ENCODE measurements at regions of chr1 and their contacts with region 1.

Region 1: GRCh38 chr1:189429610-189430009 is 1048.1 kb downstream of the BRINP3 start:
- DNase-seq: peak; percentile 81
- H3K4me3 ChIP-seq: no peak overlapping the region
- H3K27ac ChIP-seq: no peak overlapping the region
- H3K4me1 ChIP-seq: no peaks in the 10 kb centered on the region
- H3K27me3 ChIP-seq: no peaks in the 10 kb centered on the region
- CTCF ChIP-seq: peak; percentile 72

Region 2: GRCh38 chr1:189637041-189637440 is 207.4 kb after region 1 on chr1:
- CTCF ChIA-PET with region 1: no interaction called
- POLR2A ChIA-PET with region 1: no interaction called
- intact Hi-C with region 1: no loop called
- DNase-seq: no peak
- H3K4me3 ChIP-seq: no peak overlapping the region
- H3K27ac ChIP-seq: no peak overlapping the region
- H3K4me1 ChIP-seq: no peaks in the 10 kb centered on the region
- H3K27me3 ChIP-seq: no peaks in the 10 kb centered on the region
- CTCF ChIP-seq: no peak

Region 3: GRCh38 chr1:189654906-189655305 is 225.3 kb after region 1 on chr1:
- CTCF ChIA-PET with region 1: no interaction called
- POLR2A ChIA-PET with region 1: no interaction called
- intact Hi-C with region 1: loop called (anchors 5 kb)
- DNase-seq: peak; percentile 83
- H3K4me3 ChIP-seq: no peak overlapping the region
- H3K27ac ChIP-seq: no peak overlapping the region
- H3K4me1 ChIP-seq: peaks cover 23% of the 10 kb centered on the region
- H3K27me3 ChIP-seq: no peaks in the 10 kb centered on the region
- CTCF ChIP-seq: no peak

Region 4: DNA sequence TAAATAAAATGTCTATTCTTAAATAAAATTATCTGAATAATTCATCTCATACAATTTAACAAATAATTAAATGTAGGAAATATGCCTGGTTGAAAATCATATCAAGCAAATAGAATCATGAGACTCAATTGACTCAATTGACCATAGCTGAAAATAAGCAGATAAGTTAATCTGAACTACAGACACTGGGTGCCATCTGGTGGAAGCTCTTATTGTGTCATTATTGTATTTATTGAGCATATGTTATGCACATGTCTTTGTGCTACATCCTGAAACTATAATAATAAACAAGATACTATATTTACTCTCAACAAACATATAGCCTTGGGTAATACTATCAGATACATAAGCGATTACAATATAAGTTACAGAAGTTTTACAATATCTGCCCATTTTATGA is 1007.0 kb after region 1 on chr1:
- CTCF ChIA-PET with region 1: no interaction called
- POLR2A ChIA-PET with region 1: no interaction called
- intact Hi-C with region 1: loop called (anchors 10 kb)
- DNase-seq: peak; percentile 63
- H3K4me3 ChIP-seq: no peak overlapping the region
- H3K27ac ChIP-seq: no peak overlapping the region
- H3K4me1 ChIP-seq: no peaks in the 10 kb centered on the region
- H3K27me3 ChIP-seq: no peaks in the 10 kb centered on the region
- CTCF ChIP-seq: peak; percentile 66

Measured in A673 (cell line).